Common myeloid progenitor, CD34-positive (primary cell): ENCODE measurements at regions of chr9 and their contacts with region 1.

Region 1: GRCh38 chr9:98775831-98776441 is 20.4 kb downstream of the ANKS6 start:
- DNase-seq: peak; percentile 73 to 83 (median 78)
- H3K4me3 ChIP-seq: no peak overlapping the region
- H3K27ac ChIP-seq: no peak overlapping the region
- H3K4me1 ChIP-seq: no peaks in the 10 kb centered on the region
- H3K27me3 ChIP-seq: no peaks in the 10 kb centered on the region

Region 2: DNA sequence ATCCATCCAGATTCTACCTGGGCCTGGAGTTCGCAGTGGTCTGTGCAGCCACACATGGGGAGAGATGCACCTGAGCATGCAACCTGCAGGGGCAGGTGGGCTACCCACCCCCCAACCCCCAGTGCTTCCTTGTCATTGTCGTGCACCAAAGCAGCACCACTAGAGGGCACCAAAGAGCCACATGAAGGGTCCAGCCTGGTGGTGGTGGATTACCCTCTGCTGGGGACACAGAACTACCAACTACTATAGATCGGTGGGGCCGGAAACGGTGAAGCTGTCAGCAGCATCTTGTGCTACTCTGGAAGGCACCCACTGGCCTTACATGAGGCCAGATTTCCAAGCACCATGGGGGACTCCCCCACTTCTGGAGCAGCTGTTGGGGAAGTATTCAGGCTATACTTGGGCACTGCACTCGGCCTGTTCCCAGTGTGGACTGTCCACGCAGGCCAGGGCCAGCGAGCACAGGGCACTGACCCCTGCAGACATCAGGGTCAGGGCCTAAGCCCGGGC is 460.3 kb before region 1 on chr9:
- CTCF ChIA-PET with region 1: interaction called, 127 read pairs
- POLR2A ChIA-PET with region 1: interaction called, 3 read pairs
- DNase-seq: peak; percentile 86 to 94 (median 92)
- H3K4me3 ChIP-seq: no peak overlapping the region
- H3K27ac ChIP-seq: no peak overlapping the region
- H3K4me1 ChIP-seq: peaks cover 0 to 4% (median 0%) of the 10 kb centered on the region in 4 experiments
- H3K27me3 ChIP-seq: peaks cover 0 to 4% (median 2%) of the 10 kb centered on the region in 5 experiments

Region 3: DNA sequence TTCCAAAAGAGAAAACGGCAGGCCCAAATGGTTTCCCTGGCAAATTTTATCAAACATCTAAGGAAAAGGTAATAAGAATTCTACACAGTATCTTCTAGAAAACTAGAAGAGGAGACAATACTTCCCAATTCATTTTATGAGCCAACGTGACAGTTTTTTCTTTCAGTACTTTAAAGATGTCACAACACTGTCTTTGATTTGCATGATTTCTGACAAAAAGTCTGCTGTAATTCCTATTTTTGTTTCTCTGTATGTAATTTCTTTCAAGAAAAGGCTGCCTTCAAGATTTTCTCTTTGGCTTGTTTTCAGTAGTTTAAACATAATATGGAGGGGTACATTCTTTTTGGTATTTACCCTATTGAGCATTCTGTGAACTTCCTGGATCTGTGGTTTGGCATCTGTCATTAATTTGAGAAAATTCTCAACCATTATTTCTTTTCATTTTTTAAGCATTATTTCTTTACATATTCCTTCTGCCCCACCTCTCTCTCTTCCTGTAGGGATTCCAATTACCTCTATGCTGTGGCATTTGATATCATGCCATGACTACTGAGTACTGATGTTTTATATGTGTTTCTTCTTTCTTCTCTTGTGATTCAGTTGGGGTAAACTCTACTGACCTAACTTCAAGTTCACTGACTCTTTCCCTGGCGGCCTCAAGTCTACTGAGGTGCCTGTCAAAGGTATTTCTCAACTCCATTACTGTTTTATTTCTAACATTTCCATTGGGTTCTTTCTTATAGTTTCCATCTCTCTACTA is 11.8 kb before region 1 on chr9:
- CTCF ChIA-PET with region 1: interaction called, 16 read pairs
- POLR2A ChIA-PET with region 1: no interaction called
- DNase-seq: no peak
- H3K4me3 ChIP-seq: no peak overlapping the region
- H3K27ac ChIP-seq: no peak overlapping the region
- H3K4me1 ChIP-seq: no peaks in the 10 kb centered on the region
- H3K27me3 ChIP-seq: no peaks in the 10 kb centered on the region

Region 4: GRCh38 chr9:98791147-98792095 is 15.5 kb after region 1 on chr9:
- CTCF ChIA-PET with region 1: interaction called, 46 read pairs
- POLR2A ChIA-PET with region 1: interaction called, 5 read pairs
- DNase-seq: peak; percentile 63 to 77 (median 77)
- H3K4me3 ChIP-seq: no peak overlapping the region
- H3K27ac ChIP-seq: no peak overlapping the region
- H3K4me1 ChIP-seq: peaks cover 0 to 13% (median 7%) of the 10 kb centered on the region in 4 experiments
- H3K27me3 ChIP-seq: no peaks in the 10 kb centered on the region

Region 5: DNA sequence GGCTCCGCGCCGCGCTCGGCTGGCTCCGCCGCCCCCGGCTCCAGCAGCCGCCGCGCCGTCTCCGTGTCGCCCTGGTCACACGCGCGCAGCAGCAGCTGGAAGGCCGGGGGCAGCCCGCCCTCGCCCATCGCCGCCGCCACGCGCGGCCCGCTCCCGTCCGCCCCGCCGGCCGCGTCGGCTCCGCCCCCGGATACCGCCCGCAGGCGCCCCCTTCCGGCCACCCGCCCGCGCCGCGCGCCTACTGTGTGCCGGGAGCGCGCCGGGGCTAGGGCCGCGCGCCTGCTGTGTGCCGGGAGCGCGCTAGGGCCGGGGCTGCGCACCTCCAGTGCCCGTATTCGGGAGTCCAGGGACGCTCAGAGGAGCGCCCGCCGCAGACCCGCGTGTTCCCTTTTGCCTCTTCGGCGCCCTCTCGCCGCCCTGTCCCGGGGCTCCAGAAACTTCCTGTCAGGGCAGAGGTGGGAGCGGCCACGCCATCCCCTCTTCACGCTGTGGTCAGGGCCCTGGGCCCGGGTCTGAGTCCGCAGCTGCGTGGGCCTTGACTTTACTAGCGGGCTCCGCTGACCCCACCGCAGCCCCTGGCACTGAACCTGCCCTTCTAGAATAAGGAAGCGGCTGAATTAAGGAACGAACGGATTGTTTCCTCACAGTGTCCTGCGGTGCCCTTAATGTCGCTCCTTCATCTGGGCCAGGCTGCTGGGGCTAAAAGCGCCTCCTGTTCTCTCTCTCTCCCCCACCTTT is 20.6 kb after region 1 on chr9 and contains the start of gene ANKS6:
- CTCF ChIA-PET with region 1: interaction called, 46 read pairs
- POLR2A ChIA-PET with region 1: no interaction called
- DNase-seq: peak; percentile 68 to 83 (median 78)
- H3K4me3 ChIP-seq: peak within 1 kb of the TSS; percentile 47 to 82 (median 70)
- H3K27ac ChIP-seq: no peak within 1 kb of the TSS
- H3K4me1 ChIP-seq: peaks cover 0 to 17% (median 12%) of the 10 kb centered on the region in 4 experiments
- H3K27me3 ChIP-seq: no peaks in the 10 kb centered on the region

Region 6: DNA sequence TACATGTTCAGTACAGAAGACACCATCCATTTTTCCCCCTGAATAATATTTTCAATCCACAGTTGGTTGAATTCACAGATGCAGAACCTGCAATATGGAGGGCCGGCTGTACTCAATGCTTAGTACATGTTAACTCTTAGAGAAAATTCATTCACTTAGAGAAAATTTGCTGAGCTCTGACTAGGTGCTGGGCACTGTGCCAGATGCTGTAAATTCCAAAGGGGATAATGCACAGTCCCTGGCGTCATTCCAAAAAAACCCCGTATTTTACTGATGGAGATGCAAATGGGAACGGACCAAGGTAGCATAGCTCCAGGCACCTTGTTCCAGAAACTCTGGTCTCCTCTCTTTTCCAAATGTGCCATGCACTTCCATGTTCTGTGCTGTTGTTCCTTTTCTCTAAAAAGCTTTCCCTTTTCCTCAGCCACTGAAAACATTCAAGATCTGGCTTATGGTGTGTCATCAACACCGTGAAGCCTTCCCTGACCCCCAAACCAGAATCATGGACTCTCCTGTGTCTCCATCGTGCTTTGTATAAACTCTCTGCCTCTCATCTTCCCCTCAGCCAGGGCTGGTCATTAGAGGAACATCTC is 112.1 kb after region 1 on chr9:
- CTCF ChIA-PET with region 1: no interaction called
- POLR2A ChIA-PET with region 1: no interaction called
- DNase-seq: no peak
- H3K4me3 ChIP-seq: no peak overlapping the region
- H3K27ac ChIP-seq: no peak overlapping the region
- H3K4me1 ChIP-seq: peaks cover 0 to 9% (median 0%) of the 10 kb centered on the region in 4 experiments
- H3K27me3 ChIP-seq: peaks cover 0 to 3% (median 0%) of the 10 kb centered on the region in 5 experiments

Region 7: GRCh38 chr9:99071313-99072039 is 295.5 kb after region 1 on chr9:
- CTCF ChIA-PET with region 1: no interaction called
- POLR2A ChIA-PET with region 1: no interaction called
- DNase-seq: no peak
- H3K4me3 ChIP-seq: no peak overlapping the region
- H3K27ac ChIP-seq: no peak overlapping the region
- H3K4me1 ChIP-seq: peaks cover 0 to 22% (median 14%) of the 10 kb centered on the region in 4 experiments
- H3K27me3 ChIP-seq: no peaks in the 10 kb centered on the region